Heart right ventricle (tissue), 16 donors: ENCODE measurements at regions of chr1 and their contacts with region 1.

Region 1: GRCh38 chr1:110524311-110525251 is 5.6 kb upstream of the KCNA10 start:
- DNase-seq: peak; percentile 20 to 29
- ATAC-seq: peak in 7 of 8 donors; percentile 26 to 79 (median 62)
- H3K4me3 ChIP-seq: peak overlapping the region in 2 of 10 donors; percentile 1 to 8
- H3K27ac ChIP-seq: no peak overlapping the region
- H3K4me1 ChIP-seq: peaks cover 0 to 8% (median 3%) of the 10 kb centered on the region in 9 donors
- H3K27me3 ChIP-seq: peaks cover 0 to 66% (median 41%) of the 10 kb centered on the region in 7 donors
- CTCF ChIP-seq: peak; percentile 43 to 78 (median 73)

Region 2: DNA sequence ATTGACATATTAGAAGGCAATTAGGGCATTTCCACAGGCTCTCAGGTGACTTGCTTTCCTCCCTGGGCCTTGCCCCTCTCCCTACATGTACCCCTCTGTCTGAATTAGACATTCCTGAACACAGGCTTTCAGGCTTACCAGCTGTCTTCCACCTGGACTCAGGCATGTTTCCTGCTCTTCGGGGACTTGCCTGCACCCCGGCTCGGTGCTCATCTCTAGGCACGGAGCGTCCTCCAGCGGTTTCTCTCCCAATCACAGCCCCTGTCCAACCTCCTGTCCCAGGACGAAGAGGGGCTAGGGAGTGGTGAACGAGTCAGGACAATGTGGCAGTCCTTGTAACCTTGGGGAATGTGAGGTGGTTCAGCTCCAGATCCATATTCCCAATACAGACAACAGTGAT is 69.4 kb before region 1 on chr1:
- intact Hi-C with region 1: no loop called
- DNase-seq: no peak
- ATAC-seq: no peak
- H3K4me3 ChIP-seq: no peak overlapping the region
- H3K27ac ChIP-seq: no peak overlapping the region
- H3K4me1 ChIP-seq: no peaks in the 10 kb centered on the region
- H3K27me3 ChIP-seq: peaks cover 0 to 30% (median 12%) of the 10 kb centered on the region in 7 donors
- CTCF ChIP-seq: no peak

Region 3: GRCh38 chr1:110619412-110620249 is 95.0 kb after region 1 on chr1:
- intact Hi-C with region 1: loop called (anchors 1 to 10 kb)
- DNase-seq: peak; percentile 83
- ATAC-seq: peak; percentile 76 to 95 (median 91)
- H3K4me3 ChIP-seq: peak overlapping the region in 3 of 10 donors; percentile 1 to 46 (median 15)
- H3K27ac ChIP-seq: peak overlapping the region in 1 of 10 donors; percentile 52
- H3K4me1 ChIP-seq: peaks cover 0 to 11% (median 9%) of the 10 kb centered on the region in 9 donors
- H3K27me3 ChIP-seq: peaks cover 3 to 51% (median 41%) of the 10 kb centered on the region in 7 donors
- CTCF ChIP-seq: peak; percentile 90 to 97 (median 95)

Region 4: DNA sequence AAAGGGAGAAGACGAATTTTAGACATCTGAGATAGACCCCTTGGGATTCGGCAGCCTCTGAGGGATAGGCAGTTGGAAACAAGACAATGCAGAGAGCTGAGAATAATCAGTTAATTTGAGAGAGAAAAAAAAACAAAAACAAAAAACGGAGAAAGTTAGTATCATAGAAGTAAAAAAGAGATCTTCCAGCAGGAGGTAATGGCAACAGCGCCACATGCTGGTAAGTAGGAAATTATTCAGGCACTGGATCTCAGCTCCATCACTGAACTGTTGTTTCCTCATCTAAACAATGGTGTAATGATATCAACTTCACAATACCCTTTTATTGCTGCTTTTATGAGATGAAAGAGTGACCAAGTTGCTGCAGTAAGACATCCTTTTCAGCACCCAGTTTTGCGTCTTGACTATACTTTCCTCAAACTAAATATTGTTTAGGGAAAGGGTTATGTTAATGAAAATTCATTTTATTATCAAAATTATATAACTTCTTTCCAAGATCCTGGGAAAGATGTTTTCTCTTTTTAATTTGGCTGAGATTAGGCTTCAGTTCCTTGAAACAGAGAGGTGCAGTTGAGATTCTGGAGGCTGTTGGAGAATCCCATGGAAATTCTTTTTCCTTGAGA is 241.6 kb after region 1 on chr1:
- intact Hi-C with region 1: loop called in 2 of 10 experiments (anchors 10 kb)
- DNase-seq: peak in 1 of 2 donors; percentile 42
- ATAC-seq: peak in 4 of 8 donors; percentile 58 to 69 (median 60)
- H3K4me3 ChIP-seq: no peak overlapping the region
- H3K27ac ChIP-seq: no peak overlapping the region
- H3K4me1 ChIP-seq: peaks cover 0 to 7% (median 0%) of the 10 kb centered on the region in 9 donors
- H3K27me3 ChIP-seq: peaks cover 0 to 38% (median 22%) of the 10 kb centered on the region in 7 donors
- CTCF ChIP-seq: peak; percentile 60 to 89 (median 85)

Region 5: DNA sequence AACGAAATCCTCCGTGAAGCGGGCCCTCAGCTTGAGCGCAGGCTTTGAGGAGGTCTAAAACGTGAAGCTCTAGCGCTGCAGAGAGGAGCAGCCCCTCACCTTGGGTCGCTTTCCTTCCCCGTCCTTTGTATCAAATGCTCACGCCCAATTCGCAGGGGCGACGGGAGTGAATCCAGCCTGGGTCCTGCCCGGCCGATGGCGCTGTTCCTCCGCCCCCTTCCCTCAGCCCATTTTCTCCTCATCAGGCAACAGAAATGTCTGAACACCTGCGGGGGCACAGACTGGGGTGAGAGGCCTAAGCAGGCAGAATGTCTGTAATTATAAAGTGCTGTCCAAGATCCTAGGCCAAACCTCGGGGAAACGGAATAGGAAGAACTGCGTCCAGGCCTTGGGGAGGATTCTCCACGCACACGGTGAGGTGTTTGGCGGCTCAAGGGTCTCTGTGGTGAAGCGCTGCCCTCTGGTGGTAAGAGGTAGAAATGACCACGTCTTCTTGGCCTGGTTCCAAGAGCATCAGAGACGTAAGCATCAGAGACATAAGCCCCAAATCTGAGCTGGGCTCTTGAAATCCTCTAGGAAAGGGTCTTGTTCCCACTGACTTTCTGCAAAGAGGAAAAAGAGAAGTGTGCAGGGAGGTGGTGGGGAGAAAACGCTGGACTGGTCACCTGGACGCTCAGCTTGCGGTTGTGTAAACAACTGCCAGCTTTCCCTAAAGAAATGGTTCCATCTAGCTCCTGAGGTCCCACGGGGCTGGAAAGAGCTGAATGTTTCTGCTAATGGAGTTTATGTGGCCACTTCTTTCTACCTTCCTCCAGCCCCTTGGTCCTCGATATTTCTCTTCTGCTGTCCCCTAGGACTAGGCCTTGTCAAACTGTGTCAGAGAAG is 256.3 kb after region 1 on chr1:
- intact Hi-C with region 1: loop called in 5 of 10 experiments (anchors 10 kb)
- DNase-seq: peak; percentile 38 to 54
- ATAC-seq: peak; percentile 43 to 72 (median 60)
- H3K4me3 ChIP-seq: no peak overlapping the region
- H3K27ac ChIP-seq: no peak overlapping the region
- H3K4me1 ChIP-seq: peaks cover 0 to 35% (median 3%) of the 10 kb centered on the region in 9 donors
- H3K27me3 ChIP-seq: peaks cover 0 to 31% (median 11%) of the 10 kb centered on the region in 7 donors
- CTCF ChIP-seq: peak; percentile 72 to 93 (median 88)